ENCODE measurements at regions of chrX and their contacts with region 1.

Region 1: GRCh38 chrX:79153348-79153747 is 8.9 kb downstream of the GPR174 start:
- DNase-seq: no peak
- H3K4me3 ChIP-seq: peak overlapping the region; percentile 34 to 42
- H3K4me3 Mint-ChIP-seq: peak overlapping the region; percentile 57 to 93 (median 84)
- H3K27ac ChIP-seq: peak overlapping the region; percentile 71
- H3K27ac Mint-ChIP-seq: peak overlapping the region; percentile 83 to 97 (median 93)
- H3K4me1 ChIP-seq: peaks cover 94% of the 10 kb centered on the region
- H3K4me1 Mint-ChIP-seq: peaks cover 34 to 81% (median 42%) of the 10 kb centered on the region in 4 donors
- H3K27me3 ChIP-seq: no peaks in the 10 kb centered on the region
- H3K27me3 Mint-ChIP-seq: no peaks in the 10 kb centered on the region

Region 2: DNA sequence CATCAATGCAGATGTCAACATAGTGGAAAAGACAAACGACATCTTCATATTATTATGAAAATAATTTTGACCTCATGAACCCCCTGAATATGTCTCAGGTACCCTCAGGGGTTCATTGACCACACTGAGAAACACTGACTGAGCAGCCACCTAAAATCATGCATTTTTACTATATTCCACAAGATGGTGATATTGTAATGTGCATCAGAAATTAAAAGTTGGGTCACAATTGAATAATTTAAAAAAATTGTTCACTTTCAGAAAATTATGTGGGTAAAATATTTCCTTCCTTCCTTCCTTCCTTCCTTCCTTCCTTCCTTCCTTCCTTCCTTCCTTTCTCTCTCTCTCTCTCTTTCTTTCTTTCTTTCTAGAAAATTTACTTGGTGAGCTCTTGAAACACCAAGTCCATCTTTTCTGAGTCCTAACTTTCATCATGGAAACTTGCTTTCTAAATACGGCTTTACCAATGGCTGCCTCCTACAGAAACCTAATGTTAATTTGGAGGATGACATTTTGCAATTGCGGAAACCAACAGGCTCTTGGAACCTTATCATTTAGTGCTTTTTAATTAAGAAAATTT is 597.9 kb before region 1 on chrX:
- CTCF ChIA-PET with region 1: no interaction called
- POLR2A ChIA-PET with region 1: no interaction called
- intact Hi-C with region 1: no loop called
- DNase-seq: peak in 4 of 5 donors; percentile 31 to 39 (median 33)
- H3K4me3 ChIP-seq: no peak overlapping the region
- H3K4me3 Mint-ChIP-seq: peak overlapping the region in 2 of 8 donors; percentile 24 to 34
- H3K27ac ChIP-seq: no peak overlapping the region
- H3K27ac Mint-ChIP-seq: peak overlapping the region in 5 of 7 donors; percentile 36 to 90 (median 75)
- H3K4me1 ChIP-seq: peaks cover 6% of the 10 kb centered on the region
- H3K4me1 Mint-ChIP-seq: peaks cover 0 to 1% (median 0%) of the 10 kb centered on the region in 4 donors
- H3K27me3 ChIP-seq: no peaks in the 10 kb centered on the region
- H3K27me3 Mint-ChIP-seq: no peaks in the 10 kb centered on the region

Region 3: GRCh38 chrX:79096145-79096556 is 57.2 kb before region 1 on chrX:
- CTCF ChIA-PET with region 1: interaction called, 4 read pairs
- POLR2A ChIA-PET with region 1: interaction called, 34 read pairs
- intact Hi-C with region 1: no loop called
- DNase-seq: peak in 3 of 5 donors; percentile 41 to 45 (median 42)
- H3K4me3 ChIP-seq: peak overlapping the region; percentile 17 to 33
- H3K4me3 Mint-ChIP-seq: peak overlapping the region; percentile 31 to 84 (median 56)
- H3K27ac ChIP-seq: peak overlapping the region; percentile 68
- H3K27ac Mint-ChIP-seq: peak overlapping the region; percentile 83 to 96 (median 91)
- H3K4me1 ChIP-seq: peaks cover 69% of the 10 kb centered on the region
- H3K4me1 Mint-ChIP-seq: peaks cover 31 to 70% (median 52%) of the 10 kb centered on the region in 4 donors
- H3K27me3 ChIP-seq: no peaks in the 10 kb centered on the region
- H3K27me3 Mint-ChIP-seq: no peaks in the 10 kb centered on the region

Region 4: GRCh38 chrX:79167462-79167861 is 14.1 kb after region 1 on chrX:
- CTCF ChIA-PET with region 1: interaction called, 6 read pairs
- POLR2A ChIA-PET with region 1: interaction called, 109 read pairs
- intact Hi-C with region 1: no loop called
- DNase-seq: no peak
- H3K4me3 ChIP-seq: peak overlapping the region in 1 of 2 donors; percentile 23
- H3K4me3 Mint-ChIP-seq: peak overlapping the region; percentile 19 to 81 (median 60)
- H3K27ac ChIP-seq: peak overlapping the region; percentile 66
- H3K27ac Mint-ChIP-seq: peak overlapping the region; percentile 77 to 97 (median 90)
- H3K4me1 ChIP-seq: peaks cover 98% of the 10 kb centered on the region
- H3K4me1 Mint-ChIP-seq: peaks cover 47 to 95% (median 67%) of the 10 kb centered on the region in 4 donors
- H3K27me3 ChIP-seq: no peaks in the 10 kb centered on the region
- H3K27me3 Mint-ChIP-seq: no peaks in the 10 kb centered on the region

Region 5: GRCh38 chrX:79176028-79176427 is 22.7 kb after region 1 on chrX:
- CTCF ChIA-PET with region 1: interaction called, 4 read pairs
- POLR2A ChIA-PET with region 1: interaction called, 19 read pairs
- intact Hi-C with region 1: no loop called
- DNase-seq: peak in 1 of 5 donors; percentile 28
- H3K4me3 ChIP-seq: peak overlapping the region in 1 of 2 donors; percentile 13
- H3K4me3 Mint-ChIP-seq: peak overlapping the region in 5 of 8 donors; percentile 33 to 77 (median 61)
- H3K27ac ChIP-seq: peak overlapping the region; percentile 34
- H3K27ac Mint-ChIP-seq: peak overlapping the region; percentile 26 to 92 (median 81)
- H3K4me1 ChIP-seq: peaks cover 90% of the 10 kb centered on the region
- H3K4me1 Mint-ChIP-seq: peaks cover 45 to 91% (median 66%) of the 10 kb centered on the region in 4 donors
- H3K27me3 ChIP-seq: no peaks in the 10 kb centered on the region
- H3K27me3 Mint-ChIP-seq: no peaks in the 10 kb centered on the region

Region 6: DNA sequence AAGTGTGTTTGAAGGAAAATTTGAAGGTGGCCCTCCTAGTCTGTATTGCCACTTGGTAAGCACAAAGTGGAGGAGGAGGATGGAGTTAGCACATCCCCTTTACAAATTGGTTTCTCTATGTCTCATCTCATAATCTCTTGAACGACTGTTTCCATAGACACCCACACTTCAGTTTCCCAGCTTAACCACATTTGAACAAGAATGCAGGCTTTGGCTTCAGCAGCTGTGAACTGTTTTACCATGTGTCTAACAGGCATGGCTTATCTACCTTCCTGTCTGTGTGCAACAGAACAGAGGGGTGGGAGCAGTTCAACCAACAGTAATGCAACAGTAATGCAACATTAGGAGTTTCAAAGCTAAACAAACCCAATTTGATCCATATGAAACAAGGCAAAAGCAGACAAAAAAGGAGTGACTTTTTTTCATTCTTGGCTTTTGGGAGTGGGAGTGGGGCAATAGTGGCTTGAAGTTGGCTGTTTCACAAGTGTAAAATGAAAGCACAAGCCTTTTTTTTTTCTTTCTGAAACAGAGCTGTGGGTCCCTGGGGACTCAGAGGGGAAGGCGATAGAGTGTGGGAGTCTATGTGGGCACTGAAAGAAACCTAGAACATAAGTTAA is 105.8 kb after region 1 on chrX:
- CTCF ChIA-PET with region 1: no interaction called
- POLR2A ChIA-PET with region 1: interaction called, 16 read pairs
- intact Hi-C with region 1: no loop called
- DNase-seq: peak; percentile 71 to 82 (median 77)
- H3K4me3 ChIP-seq: no peak overlapping the region
- H3K4me3 Mint-ChIP-seq: peak overlapping the region; percentile 46 to 87 (median 66)
- H3K27ac ChIP-seq: peak overlapping the region; percentile 58
- H3K27ac Mint-ChIP-seq: peak overlapping the region; percentile 86 to 96 (median 94)
- H3K4me1 ChIP-seq: peaks cover 89% of the 10 kb centered on the region
- H3K4me1 Mint-ChIP-seq: peaks cover 51 to 86% (median 68%) of the 10 kb centered on the region in 4 donors
- H3K27me3 ChIP-seq: no peaks in the 10 kb centered on the region
- H3K27me3 Mint-ChIP-seq: no peaks in the 10 kb centered on the region

Measured in CD4-positive, alpha-beta memory T cell (primary cell).